ENCODE measurements at regions of chr11 and their contacts with region 1.

Region 1: DNA sequence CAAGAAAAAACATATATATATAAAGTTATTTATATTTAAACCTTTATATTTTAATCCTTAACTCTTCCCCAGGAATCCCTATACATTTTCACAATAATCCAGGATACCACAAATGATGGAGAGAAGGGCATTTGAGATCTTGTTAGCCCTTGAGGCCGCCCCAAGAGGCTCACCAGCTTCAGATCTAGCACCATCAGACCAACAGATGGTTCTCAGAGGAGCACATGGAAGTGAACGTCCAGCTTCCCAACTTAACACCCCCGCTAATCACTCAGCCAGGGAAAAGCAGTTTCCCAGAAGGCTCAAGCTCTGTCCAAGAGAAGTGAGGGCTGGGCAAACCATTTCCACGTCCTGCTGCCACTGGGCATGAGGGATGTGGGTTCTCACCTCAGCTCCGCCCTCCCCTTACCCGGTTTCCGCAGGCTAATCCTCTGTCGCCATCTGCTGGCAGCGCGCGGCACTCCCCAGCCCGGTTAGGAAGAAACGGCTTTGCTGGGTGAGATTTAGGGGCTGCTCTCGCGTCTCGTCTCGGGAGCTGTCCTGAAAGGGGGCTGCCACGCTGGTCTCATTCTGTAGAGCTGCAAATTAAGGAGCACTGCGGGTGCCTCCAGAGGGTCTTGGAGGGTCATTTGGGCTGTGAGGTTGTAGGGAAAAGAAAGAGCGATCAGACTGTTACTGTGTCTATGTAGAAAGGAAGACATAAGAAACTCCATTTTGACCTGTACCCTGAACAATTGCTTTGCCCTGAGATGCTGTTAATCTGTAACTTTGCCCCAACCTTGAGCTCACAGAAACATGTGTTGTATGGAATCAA is 6.8 kb upstream of the FAM111A start:
- DNase-seq: peak; percentile 90
- H3K4me3 Mint-ChIP-seq: peak overlapping the region; percentile 28
- H3K27ac Mint-ChIP-seq: peak overlapping the region; percentile 33
- H3K4me1 Mint-ChIP-seq: peaks cover 30% of the 10 kb centered on the region
- H3K27me3 Mint-ChIP-seq: no peaks in the 10 kb centered on the region

Region 2: GRCh38 chr11:59053387-59053786 is 82.5 kb before region 1 on chr11:
- CTCF ChIA-PET with region 1: interaction called, 20 read pairs
- POLR2A ChIA-PET with region 1: no interaction called
- DNase-seq: peak; percentile 81
- H3K4me3 Mint-ChIP-seq: no peak overlapping the region
- H3K27ac Mint-ChIP-seq: no peak overlapping the region
- H3K4me1 Mint-ChIP-seq: peaks cover 3% of the 10 kb centered on the region
- H3K27me3 Mint-ChIP-seq: peaks cover 30% of the 10 kb centered on the region

Region 3: GRCh38 chr11:59097113-59097708 is 38.6 kb before region 1 on chr11:
- CTCF ChIA-PET with region 1: interaction called, 37 read pairs
- POLR2A ChIA-PET with region 1: no interaction called
- DNase-seq: peak; percentile 73
- H3K4me3 Mint-ChIP-seq: no peak overlapping the region
- H3K27ac Mint-ChIP-seq: no peak overlapping the region
- H3K4me1 Mint-ChIP-seq: peaks cover 14% of the 10 kb centered on the region
- H3K27me3 Mint-ChIP-seq: peaks cover 23% of the 10 kb centered on the region

Region 4: DNA sequence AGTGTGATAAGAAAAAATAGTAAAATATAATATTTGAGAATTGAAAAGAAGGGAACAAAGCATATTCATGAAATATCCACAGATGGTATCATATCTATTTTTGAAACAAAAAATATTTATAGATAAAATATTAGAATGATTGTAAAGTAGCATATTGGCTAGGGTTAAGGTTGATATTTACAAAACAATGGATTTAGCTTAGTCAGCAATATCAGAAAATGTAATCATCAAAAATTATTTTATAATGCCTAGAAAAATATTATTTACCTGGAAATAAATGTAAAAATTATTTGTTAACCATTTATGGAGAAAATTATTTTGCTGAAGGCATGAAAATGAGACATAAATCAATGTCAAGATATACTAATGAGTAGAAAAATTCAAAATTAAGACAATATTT is 16.0 kb before region 1 on chr11:
- CTCF ChIA-PET with region 1: interaction called, 11 read pairs
- POLR2A ChIA-PET with region 1: interaction called, 3 read pairs
- DNase-seq: no peak
- H3K4me3 Mint-ChIP-seq: no peak overlapping the region
- H3K27ac Mint-ChIP-seq: no peak overlapping the region
- H3K4me1 Mint-ChIP-seq: peaks cover 3% of the 10 kb centered on the region
- H3K27me3 Mint-ChIP-seq: no peaks in the 10 kb centered on the region

Region 5: GRCh38 chr11:59158206-59159068 is 22.6 kb after region 1 on chr11:
- CTCF ChIA-PET with region 1: interaction called, 61 read pairs
- POLR2A ChIA-PET with region 1: interaction called, 24 read pairs
- DNase-seq: peak; percentile 69
- H3K4me3 Mint-ChIP-seq: no peak overlapping the region
- H3K27ac Mint-ChIP-seq: no peak overlapping the region
- H3K4me1 Mint-ChIP-seq: peaks cover 10% of the 10 kb centered on the region
- H3K27me3 Mint-ChIP-seq: peaks cover 7% of the 10 kb centered on the region

Region 6: DNA sequence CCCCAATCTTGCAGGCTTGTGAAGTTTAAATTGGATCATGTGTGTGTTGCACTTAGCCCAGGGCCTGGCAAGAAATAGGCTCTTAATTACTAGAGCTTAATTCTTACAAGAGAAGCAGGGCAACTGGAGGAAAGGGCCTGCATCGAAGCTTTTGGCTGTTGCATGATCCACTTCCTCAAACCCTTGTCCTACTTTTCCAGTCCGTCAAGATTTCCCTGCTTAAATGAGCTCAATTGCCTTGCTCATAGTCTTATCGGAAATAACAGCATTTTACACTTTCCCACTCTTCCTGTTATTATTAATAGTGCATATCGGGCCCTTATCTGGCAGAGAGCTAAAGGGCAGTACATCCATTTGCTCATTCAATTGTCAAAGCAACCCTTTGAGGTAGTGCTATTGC is 54.1 kb after region 1 on chr11:
- CTCF ChIA-PET with region 1: no interaction called
- POLR2A ChIA-PET with region 1: no interaction called
- DNase-seq: no peak
- H3K4me3 Mint-ChIP-seq: no peak overlapping the region
- H3K27ac Mint-ChIP-seq: no peak overlapping the region
- H3K4me1 Mint-ChIP-seq: no peaks in the 10 kb centered on the region
- H3K27me3 Mint-ChIP-seq: peaks cover 4% of the 10 kb centered on the region